ENCODE measurements at regions of chr2 and their contacts with region 1.

Region 1: GRCh38 chr2:134368009-134368817 is 114.3 kb downstream of the MGAT5 start:
- DNase-seq: no peak
- ATAC-seq: peak in 4 of 8 donors; percentile 11 to 36 (median 24)
- H3K4me3 ChIP-seq: no peak overlapping the region
- H3K27ac ChIP-seq: peak overlapping the region in 7 of 10 donors; percentile 0 to 60 (median 34)
- H3K4me1 ChIP-seq: peaks cover 21 to 75% (median 56%) of the 10 kb centered on the region in 9 donors
- H3K27me3 ChIP-seq: no peaks in the 10 kb centered on the region
- CTCF ChIP-seq: no peak

Region 2: DNA sequence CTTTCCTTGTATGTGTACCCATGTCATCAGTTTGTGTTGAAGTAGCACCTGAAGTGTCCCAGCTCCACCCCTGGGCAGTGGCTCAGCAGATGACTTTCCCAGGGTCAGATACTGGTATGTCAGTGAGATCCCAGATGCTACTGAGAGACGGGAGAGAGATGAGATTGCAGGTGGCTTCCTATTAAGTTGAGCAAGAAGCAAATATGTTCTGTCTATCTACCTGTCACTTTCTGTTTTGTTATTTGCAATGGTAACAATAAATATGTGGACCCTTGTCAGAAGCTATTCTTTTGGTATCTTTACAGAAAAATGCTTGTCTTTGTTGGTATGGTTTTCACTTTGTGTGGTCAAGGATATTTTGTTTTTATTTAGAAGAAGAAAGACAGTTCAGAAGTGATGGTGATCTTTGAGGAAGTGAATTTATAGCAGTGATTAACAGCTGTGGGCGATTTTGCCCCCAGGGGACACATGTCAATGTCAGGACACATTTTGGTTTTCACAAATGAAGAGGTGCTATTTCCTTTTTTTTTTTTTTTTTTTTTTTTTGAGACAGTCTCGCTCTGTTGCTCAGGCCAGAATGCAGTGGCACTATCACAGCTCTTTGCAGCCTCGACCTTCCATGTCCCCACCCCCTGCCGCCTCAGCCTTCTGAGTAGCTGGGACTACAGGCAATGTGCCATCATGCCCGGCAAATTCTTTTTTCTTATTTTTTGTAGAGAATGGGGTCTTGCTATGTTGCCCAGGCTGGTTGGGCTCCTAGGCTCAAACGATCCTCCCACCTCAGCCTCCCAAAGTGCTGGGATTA is 93.0 kb before region 1 on chr2:
- intact Hi-C with region 1: loop called in 1 of 10 experiments (anchors 10 kb)
- DNase-seq: no peak
- ATAC-seq: no peak
- H3K4me3 ChIP-seq: no peak overlapping the region
- H3K27ac ChIP-seq: no peak overlapping the region
- H3K4me1 ChIP-seq: peaks cover 5 to 88% (median 50%) of the 10 kb centered on the region in 9 donors
- H3K27me3 ChIP-seq: no peaks in the 10 kb centered on the region
- CTCF ChIP-seq: no peak

Region 3: DNA sequence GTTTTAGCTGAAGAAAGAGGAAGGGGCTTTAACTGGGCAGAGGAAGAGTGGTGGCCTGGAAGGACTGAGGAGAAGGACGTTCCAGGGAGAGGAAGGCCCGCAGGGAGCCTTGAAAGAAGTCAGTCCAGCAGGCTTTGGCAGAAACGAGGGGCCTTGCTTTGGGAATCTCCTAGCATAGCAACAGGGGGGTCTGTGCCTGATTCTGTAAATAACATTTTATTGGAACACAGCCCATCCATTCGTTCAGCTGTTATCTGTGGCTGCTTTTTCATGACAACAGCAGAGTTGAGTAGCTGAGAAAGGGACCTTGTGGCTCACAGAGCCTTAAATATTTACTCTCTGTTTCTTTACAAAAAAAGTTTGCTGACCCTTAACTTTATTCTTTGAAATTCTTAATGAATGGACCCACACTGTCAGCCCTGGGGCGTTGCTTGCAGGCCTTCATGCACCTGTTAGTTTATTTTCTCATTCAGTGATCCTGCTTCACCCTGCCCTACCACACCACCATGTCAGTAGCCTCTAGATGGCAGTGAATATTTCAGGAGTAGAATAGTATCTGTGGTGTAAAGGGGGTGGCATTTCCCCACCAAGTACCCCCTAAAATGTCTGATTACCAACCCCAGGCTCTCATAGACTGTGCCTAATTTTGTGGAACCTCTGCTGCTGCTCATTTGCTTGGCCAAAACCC is 53.4 kb before region 1 on chr2:
- intact Hi-C with region 1: loop called in 1 of 10 experiments (anchors 5 kb)
- DNase-seq: peak; percentile 14 to 31
- ATAC-seq: peak; percentile 28 to 62 (median 44)
- H3K4me3 ChIP-seq: no peak overlapping the region
- H3K27ac ChIP-seq: peak overlapping the region in 9 of 10 donors; percentile 13 to 69 (median 49)
- H3K4me1 ChIP-seq: peaks cover 8 to 74% (median 39%) of the 10 kb centered on the region in 9 donors
- H3K27me3 ChIP-seq: no peaks in the 10 kb centered on the region
- CTCF ChIP-seq: peak in 3 of 9 donors; percentile 19 to 27 (median 23)

Region 4: GRCh38 chr2:134402410-134402809 is 34.2 kb after region 1 on chr2:
- intact Hi-C with region 1: loop called in 1 of 10 experiments (anchors 5 kb)
- DNase-seq: peak in 1 of 2 donors; percentile 57
- ATAC-seq: peak; percentile 62 to 86 (median 76)
- H3K4me3 ChIP-seq: no peak overlapping the region
- H3K27ac ChIP-seq: peak overlapping the region in 9 of 10 donors; percentile 39 to 88 (median 71)
- H3K4me1 ChIP-seq: peaks cover 16 to 64% (median 47%) of the 10 kb centered on the region in 9 donors
- H3K27me3 ChIP-seq: no peaks in the 10 kb centered on the region
- CTCF ChIP-seq: no peak

Measured in heart right ventricle (tissue), 16 donors.